Caco-2 (cell line): ENCODE measurements at regions of chr6 and their contacts with region 1.

Region 1: DNA sequence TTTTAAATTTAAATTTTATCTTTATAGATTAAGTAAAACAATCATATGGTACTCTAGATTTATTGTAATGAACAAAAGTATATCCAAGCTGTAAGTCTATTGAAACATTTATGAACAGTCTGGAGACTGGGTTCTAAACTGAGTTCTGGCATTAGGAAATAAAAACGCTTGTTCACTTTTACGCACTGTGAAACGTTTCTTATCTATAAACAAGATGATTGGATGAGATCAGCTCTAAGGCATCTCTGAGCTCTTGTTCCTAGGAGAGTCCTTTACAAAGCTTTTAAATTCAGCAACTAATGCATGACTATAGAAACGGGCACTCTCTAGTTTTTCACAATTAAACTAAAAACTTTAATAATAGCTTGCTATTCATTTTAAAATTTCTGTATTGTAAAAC is 6.8 kb downstream of the HUS1B start:
- DNase-seq: no peak
- H3K4me3 ChIP-seq: no peak overlapping the region
- H3K4me3 Mint-ChIP-seq: no peak overlapping the region
- H3K27ac Mint-ChIP-seq: no peak overlapping the region
- H3K4me1 ChIP-seq: no peaks in the 10 kb centered on the region; the same call in 1 of the 2 replicates
- H3K4me1 Mint-ChIP-seq: no peaks in the 10 kb centered on the region
- H3K27me3 ChIP-seq: no peaks in the 10 kb centered on the region
- H3K27me3 Mint-ChIP-seq: no peaks in the 10 kb centered on the region
- CTCF ChIP-seq: no peak

Region 2: DNA sequence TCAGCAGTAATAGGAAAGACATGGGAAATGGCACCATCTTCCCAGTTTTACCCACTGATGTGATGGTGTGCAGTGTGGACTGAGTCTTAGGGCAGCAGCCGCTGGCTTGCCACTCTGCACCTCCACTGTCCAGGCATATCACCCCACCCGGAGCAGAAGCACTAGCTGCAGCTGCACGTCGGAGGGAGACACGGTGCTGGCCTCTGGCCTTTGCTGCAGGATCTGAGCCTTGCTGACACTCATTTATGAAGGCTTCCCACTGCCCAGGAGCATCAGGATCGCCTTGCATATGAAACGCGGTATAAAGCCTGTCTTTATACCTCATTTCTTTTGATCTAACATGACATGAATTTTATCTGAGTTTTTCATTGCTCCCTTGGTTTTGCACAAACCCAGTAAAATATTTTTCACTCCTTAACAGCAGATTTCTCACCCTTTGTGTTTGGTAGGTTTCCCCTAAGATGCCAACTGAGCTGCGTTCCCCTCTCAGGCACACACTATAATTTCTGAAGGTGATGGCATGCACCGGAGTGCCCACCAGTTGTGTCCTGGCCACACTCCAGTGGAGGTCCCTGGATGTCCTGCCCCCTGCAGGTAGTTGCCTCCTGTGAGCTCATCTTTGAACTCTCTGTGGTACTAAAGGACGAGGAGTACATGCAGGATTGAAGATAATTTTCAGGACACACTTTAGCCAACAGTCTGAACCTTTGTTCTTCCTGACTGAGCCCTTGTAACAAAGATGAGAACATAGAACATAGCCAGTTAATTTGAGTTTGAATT is 51.8 kb after region 1 on chr6:
- CTCF ChIA-PET with region 1: interaction called, 10 read pairs
- POLR2A ChIA-PET with region 1: no interaction called
- intact Hi-C with region 1: no loop called
- DNase-seq: peak in 1 of 2 experiments; percentile 25
- H3K4me3 ChIP-seq: no peak overlapping the region
- H3K4me3 Mint-ChIP-seq: no peak overlapping the region
- H3K27ac Mint-ChIP-seq: no peak overlapping the region
- H3K4me1 ChIP-seq: no peaks in the 10 kb centered on the region
- H3K4me1 Mint-ChIP-seq: no peaks in the 10 kb centered on the region
- H3K27me3 ChIP-seq: no peaks in the 10 kb centered on the region; the same call in 1 of the 2 replicates
- H3K27me3 Mint-ChIP-seq: peaks cover 4% of the 10 kb centered on the region
- CTCF ChIP-seq: peak; percentile 15 to 35